CD4-positive, alpha-beta T cell (primary cell): ENCODE measurements at regions of chr11 and their contacts with region 1.

Region 1: DNA sequence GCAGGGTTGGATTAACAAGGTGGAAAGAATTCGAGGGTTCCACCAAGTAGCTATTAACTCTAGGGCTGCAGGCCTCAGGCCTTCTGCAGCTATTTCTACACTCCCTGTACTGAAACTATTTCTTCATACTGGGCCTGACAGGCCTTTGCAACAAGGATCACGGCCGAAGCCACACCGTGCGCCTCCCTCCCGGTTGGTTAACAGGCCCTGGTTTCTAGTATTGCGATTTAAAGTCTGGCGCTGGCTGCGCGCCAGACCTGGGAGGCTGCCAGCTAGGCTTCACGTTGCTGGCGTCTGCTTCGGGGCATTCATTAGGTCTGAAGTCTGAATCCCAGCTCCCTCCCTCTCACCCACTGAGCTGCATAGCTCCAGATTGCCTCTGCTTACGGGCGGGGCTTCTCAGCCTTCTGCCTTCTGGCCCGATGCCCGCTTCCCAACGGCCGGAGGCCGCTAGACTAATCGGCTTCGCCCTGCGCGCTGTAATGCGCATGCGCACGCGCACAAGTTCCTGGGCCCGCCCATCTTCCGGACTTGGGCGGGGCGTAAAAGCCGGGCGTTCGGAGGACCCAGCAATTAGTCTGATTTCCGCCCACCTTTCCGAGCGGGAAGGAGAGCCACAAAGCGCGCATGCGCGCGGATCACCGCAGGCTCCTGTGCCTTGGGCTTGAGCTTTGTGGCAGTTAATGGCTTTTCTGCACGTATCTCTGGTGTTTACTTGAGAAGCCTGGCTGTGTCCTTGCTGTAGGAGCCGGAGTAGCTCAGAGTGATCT is 1.6 kb downstream of the LDHA start:
- DNase-seq: peak; percentile 84 to 98 (median 92)
- ATAC-seq: peak; percentile 62
- H3K4me3 ChIP-seq: peak overlapping the region; percentile 100
- H3K4me3 Mint-ChIP-seq: peak overlapping the region; percentile 99
- H3K27ac ChIP-seq: peak overlapping the region; percentile 89 to 90
- H3K27ac Mint-ChIP-seq: peak overlapping the region; percentile 99
- H3K4me1 ChIP-seq: peaks cover 50% of the 10 kb centered on the region
- H3K4me1 Mint-ChIP-seq: peaks cover 59% of the 10 kb centered on the region
- H3K27me3 ChIP-seq: no peaks in the 10 kb centered on the region
- H3K27me3 Mint-ChIP-seq: no peaks in the 10 kb centered on the region
- CTCF ChIP-seq: no peak

Region 2: GRCh38 chr11:16738193-16738946 is 1657.5 kb before region 1 on chr11 and contains the start of gene C11orf58:
- CTCF ChIA-PET with region 1: no interaction called
- POLR2A ChIA-PET with region 1: interaction called, 4 read pairs
- intact Hi-C with region 1: loop called in 1 of 2 experiments (anchors 10 kb)
- DNase-seq: peak; percentile 89 to 99 (median 93)
- ATAC-seq: peak; percentile 94
- H3K4me3 ChIP-seq: peak within 1 kb of the TSS; percentile 78
- H3K4me3 Mint-ChIP-seq: peak within 1 kb of the TSS; percentile 73
- H3K27ac ChIP-seq: peak within 1 kb of the TSS; percentile 94 to 98
- H3K27ac Mint-ChIP-seq: no peak within 1 kb of the TSS
- H3K4me1 ChIP-seq: peaks cover 36% of the 10 kb centered on the region
- H3K4me1 Mint-ChIP-seq: peaks cover 24% of the 10 kb centered on the region
- H3K27me3 ChIP-seq: no peaks in the 10 kb centered on the region
- H3K27me3 Mint-ChIP-seq: no peaks in the 10 kb centered on the region
- CTCF ChIP-seq: no peak
- total RNA-seq, gene C11orf58: 145 to 150 TPM

Region 3: GRCh38 chr11:18005376-18006129 is 390.4 kb before region 1 on chr11:
- CTCF ChIA-PET with region 1: no interaction called
- POLR2A ChIA-PET with region 1: no interaction called
- intact Hi-C with region 1: loop called in 1 of 2 experiments (anchors 5 kb)
- DNase-seq: no peak
- ATAC-seq: no peak
- H3K4me3 ChIP-seq: no peak overlapping the region
- H3K4me3 Mint-ChIP-seq: no peak overlapping the region
- H3K27ac ChIP-seq: no peak overlapping the region
- H3K27ac Mint-ChIP-seq: no peak overlapping the region
- H3K4me1 ChIP-seq: no peaks in the 10 kb centered on the region
- H3K4me1 Mint-ChIP-seq: peaks cover 5% of the 10 kb centered on the region
- H3K27me3 ChIP-seq: no peaks in the 10 kb centered on the region
- H3K27me3 Mint-ChIP-seq: no peaks in the 10 kb centered on the region
- CTCF ChIP-seq: no peak

Region 4: GRCh38 chr11:18105802-18106574 is 289.9 kb before region 1 on chr11 and contains the start of gene SAAL1:
- CTCF ChIA-PET with region 1: interaction called, 3 read pairs
- POLR2A ChIA-PET with region 1: interaction called, 3 read pairs
- intact Hi-C with region 1: loop called in 1 of 2 experiments (anchors 5 kb)
- DNase-seq: peak; percentile 81 to 93 (median 87)
- ATAC-seq: peak; percentile 99
- H3K4me3 ChIP-seq: peak within 1 kb of the TSS; percentile 98
- H3K4me3 Mint-ChIP-seq: peak within 1 kb of the TSS; percentile 98
- H3K27ac ChIP-seq: peak within 1 kb of the TSS; percentile 32 to 43
- H3K27ac Mint-ChIP-seq: peak within 1 kb of the TSS; percentile 81
- H3K4me1 ChIP-seq: peaks cover 17% of the 10 kb centered on the region
- H3K4me1 Mint-ChIP-seq: peaks cover 53% of the 10 kb centered on the region
- H3K27me3 ChIP-seq: no peaks in the 10 kb centered on the region
- H3K27me3 Mint-ChIP-seq: peaks cover 13% of the 10 kb centered on the region
- CTCF ChIP-seq: peak; percentile 89
- total RNA-seq, gene SAAL1: 21.3 to 24.5 TPM

Region 5: GRCh38 chr11:18332302-18332701 is 63.6 kb before region 1 on chr11:
- CTCF ChIA-PET with region 1: no interaction called
- POLR2A ChIA-PET with region 1: interaction called, 7 read pairs
- intact Hi-C with region 1: loop called in 1 of 2 experiments (anchors 2 kb)
- DNase-seq: peak in 4 of 14 experiments; percentile 22 to 78 (median 73)
- ATAC-seq: peak; percentile 74
- H3K4me3 ChIP-seq: peak overlapping the region; percentile 15
- H3K4me3 Mint-ChIP-seq: peak overlapping the region; percentile 2
- H3K27ac ChIP-seq: peak overlapping the region; percentile 73 to 83
- H3K27ac Mint-ChIP-seq: peak overlapping the region; percentile 89
- H3K4me1 ChIP-seq: peaks cover 34% of the 10 kb centered on the region
- H3K4me1 Mint-ChIP-seq: peaks cover 64% of the 10 kb centered on the region
- H3K27me3 ChIP-seq: no peaks in the 10 kb centered on the region
- H3K27me3 Mint-ChIP-seq: no peaks in the 10 kb centered on the region
- CTCF ChIP-seq: no peak

Region 6: GRCh38 chr11:18383388-18384156 is 12.3 kb before region 1 on chr11:
- CTCF ChIA-PET with region 1: interaction called, 13 read pairs
- POLR2A ChIA-PET with region 1: interaction called, 140 read pairs
- intact Hi-C with region 1: loop called in 1 of 2 experiments (anchors 1 kb)
- DNase-seq: peak; percentile 26 to 87 (median 56)
- ATAC-seq: peak; percentile 74
- H3K4me3 ChIP-seq: peak overlapping the region; percentile 35
- H3K4me3 Mint-ChIP-seq: peak overlapping the region; percentile 73
- H3K27ac ChIP-seq: peak overlapping the region; percentile 86 to 92
- H3K27ac Mint-ChIP-seq: peak overlapping the region; percentile 96
- H3K4me1 ChIP-seq: peaks cover 53% of the 10 kb centered on the region
- H3K4me1 Mint-ChIP-seq: peaks cover 44% of the 10 kb centered on the region
- H3K27me3 ChIP-seq: no peaks in the 10 kb centered on the region
- H3K27me3 Mint-ChIP-seq: no peaks in the 10 kb centered on the region
- CTCF ChIP-seq: no peak